Activated CD4-positive, alpha-beta T cell treated with anti-CD3 and anti-CD28 coated beads for 36 hours (primary cell): ENCODE measurements at regions of chr2 and their contacts with region 1.

Region 1: GRCh38 chr2:178414266-178415247 is 36.4 kb downstream of the PRKRA start:
- DNase-seq: peak; percentile 90
- ATAC-seq: peak; percentile 83
- H3K4me3 Mint-ChIP-seq: peak overlapping the region; percentile 67
- H3K27ac Mint-ChIP-seq: peak overlapping the region; percentile 71
- H3K4me1 Mint-ChIP-seq: peaks cover 11% of the 10 kb centered on the region
- H3K27me3 Mint-ChIP-seq: no peaks in the 10 kb centered on the region

Region 2: GRCh38 chr2:177906041-177906718 is 508.4 kb before region 1 on chr2:
- CTCF ChIA-PET with region 1: no interaction called
- POLR2A ChIA-PET with region 1: no interaction called
- intact Hi-C with region 1: loop called in 1 of 2 experiments (anchors 5 kb)
- DNase-seq: peak; percentile 87
- ATAC-seq: peak; percentile 95
- H3K4me3 Mint-ChIP-seq: no peak overlapping the region
- H3K27ac Mint-ChIP-seq: no peak overlapping the region
- H3K4me1 Mint-ChIP-seq: peaks cover 3% of the 10 kb centered on the region
- H3K27me3 Mint-ChIP-seq: peaks cover 2% of the 10 kb centered on the region

Region 3: GRCh38 chr2:178112202-178113152 is 302.1 kb before region 1 on chr2 and contains the start of gene RBM45:
- CTCF ChIA-PET with region 1: interaction called, 44 read pairs
- POLR2A ChIA-PET with region 1: no interaction called
- intact Hi-C with region 1: loop called (anchors 1 kb)
- DNase-seq: peak; percentile 93
- ATAC-seq: peak; percentile 93
- H3K4me3 Mint-ChIP-seq: peak within 1 kb of the TSS; percentile 92
- H3K27ac Mint-ChIP-seq: peak within 1 kb of the TSS; percentile 87
- H3K4me1 Mint-ChIP-seq: peaks cover 33% of the 10 kb centered on the region
- H3K27me3 Mint-ChIP-seq: no peaks in the 10 kb centered on the region
- total RNA-seq, gene RBM45: 10.0 to 12.9 TPM

Region 4: DNA sequence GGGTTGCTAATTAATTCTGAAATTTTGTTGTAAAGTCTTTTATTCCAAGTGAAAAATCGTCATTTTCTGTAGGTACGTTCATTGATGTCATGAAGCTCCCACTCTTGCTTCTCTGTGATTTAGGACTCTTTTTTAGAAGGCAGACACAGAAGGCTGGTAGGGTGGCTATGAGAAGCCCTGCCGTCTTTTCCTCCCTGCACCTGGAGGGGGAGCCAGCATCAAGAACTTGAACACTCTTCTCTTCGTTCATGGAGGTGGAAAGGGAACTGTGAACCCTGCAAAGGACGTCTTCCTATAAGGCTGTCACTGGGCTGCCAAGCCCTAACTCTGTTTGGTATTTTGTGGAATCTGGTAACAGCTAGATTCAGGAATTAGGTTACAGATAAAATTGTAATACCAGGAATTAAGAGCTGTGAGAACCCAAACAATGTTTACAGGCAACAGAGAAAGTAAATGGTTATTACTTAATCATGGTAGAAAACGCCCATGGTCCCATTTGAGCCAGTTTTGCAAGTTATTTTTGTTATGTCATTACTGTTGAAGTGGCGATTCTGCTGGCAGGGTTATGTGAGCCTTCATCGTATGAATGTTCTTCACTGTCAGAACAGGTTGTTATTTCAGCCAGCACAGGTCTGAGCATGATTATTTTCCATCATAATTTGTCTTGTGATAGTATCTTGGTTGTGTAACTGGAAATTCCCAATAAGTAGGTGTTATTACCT is 108.0 kb before region 1 on chr2:
- CTCF ChIA-PET with region 1: interaction called, 10 read pairs
- POLR2A ChIA-PET with region 1: no interaction called
- intact Hi-C with region 1: loop called (anchors 1 to 2 kb)
- DNase-seq: peak; percentile 59
- ATAC-seq: peak; percentile 77
- H3K4me3 Mint-ChIP-seq: no peak overlapping the region
- H3K27ac Mint-ChIP-seq: no peak overlapping the region
- H3K4me1 Mint-ChIP-seq: no peaks in the 10 kb centered on the region
- H3K27me3 Mint-ChIP-seq: peaks cover 12% of the 10 kb centered on the region

Region 5: GRCh38 chr2:178404368-178404767 is 10.2 kb before region 1 on chr2:
- CTCF ChIA-PET with region 1: interaction called, 91 read pairs
- POLR2A ChIA-PET with region 1: no interaction called
- intact Hi-C with region 1: no loop called
- DNase-seq: peak; percentile 37
- ATAC-seq: peak; percentile 78
- H3K4me3 Mint-ChIP-seq: no peak overlapping the region
- H3K27ac Mint-ChIP-seq: no peak overlapping the region
- H3K4me1 Mint-ChIP-seq: peaks cover 10% of the 10 kb centered on the region
- H3K27me3 Mint-ChIP-seq: peaks cover 2% of the 10 kb centered on the region

Region 6: DNA sequence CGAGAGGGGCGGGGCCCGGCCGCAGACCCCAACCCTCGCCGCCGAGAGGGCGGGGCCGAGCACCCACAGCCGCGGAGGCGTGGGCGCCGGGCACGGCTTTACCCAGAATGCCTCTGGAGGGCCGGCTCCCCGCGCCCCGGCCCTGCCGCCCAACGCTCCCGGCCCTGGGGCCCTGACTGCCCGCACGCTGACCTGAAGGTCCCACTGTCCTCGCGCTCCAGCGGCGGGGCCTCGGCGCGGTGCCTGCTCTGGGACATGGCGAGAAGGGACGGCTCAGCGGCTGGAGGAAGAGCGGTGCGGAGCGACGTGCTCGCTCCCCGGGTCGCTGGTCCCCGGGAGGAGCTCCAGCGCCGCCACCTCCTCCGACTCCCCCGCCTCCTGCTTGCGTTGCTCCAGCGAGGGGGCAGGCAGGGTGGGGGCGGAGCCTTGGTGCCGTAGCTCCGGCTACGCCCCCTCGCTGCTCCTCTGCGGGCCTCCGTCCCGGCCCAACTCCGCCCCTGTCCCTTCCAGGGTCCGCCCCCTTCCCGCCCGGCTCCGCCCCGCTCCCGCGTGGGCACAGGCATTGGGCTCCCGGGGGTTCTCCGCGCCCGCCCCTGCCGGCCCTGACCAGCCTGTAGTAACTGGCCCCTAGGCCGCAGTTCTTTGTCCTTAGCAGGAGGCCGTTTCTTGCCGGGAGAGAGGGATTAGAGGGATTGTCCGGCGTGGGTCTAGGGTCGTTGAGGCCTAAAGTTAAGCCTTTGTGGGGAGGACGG is 36.4 kb after region 1 on chr2 and contains the starts of genes PJVK and PRKRA:
- CTCF ChIA-PET with region 1: interaction called, 7 read pairs
- POLR2A ChIA-PET with region 1: interaction called, 4 read pairs
- intact Hi-C with region 1: loop called (anchors 1 kb)
- DNase-seq: peak; percentile 98
- ATAC-seq: peak; percentile 90
- H3K4me3 Mint-ChIP-seq: peak within 1 kb of the TSS; percentile 88
- H3K27ac Mint-ChIP-seq: peak within 1 kb of the TSS; percentile 96
- H3K4me1 Mint-ChIP-seq: peaks cover 27% of the 10 kb centered on the region
- H3K27me3 Mint-ChIP-seq: no peaks in the 10 kb centered on the region
- total RNA-seq, gene PJVK: 1.9 to 2.4 TPM
- total RNA-seq, gene PRKRA: 63.5 to 65.1 TPM

Region 7: GRCh38 chr2:178491612-178492011 is 77.1 kb after region 1 on chr2:
- CTCF ChIA-PET with region 1: no interaction called
- POLR2A ChIA-PET with region 1: no interaction called
- intact Hi-C with region 1: no loop called
- DNase-seq: no peak
- ATAC-seq: no peak
- H3K4me3 Mint-ChIP-seq: no peak overlapping the region
- H3K27ac Mint-ChIP-seq: no peak overlapping the region
- H3K4me1 Mint-ChIP-seq: peaks cover 13% of the 10 kb centered on the region
- H3K27me3 Mint-ChIP-seq: no peaks in the 10 kb centered on the region

Region 8: GRCh38 chr2:178522950-178523595 is 108.5 kb after region 1 on chr2:
- CTCF ChIA-PET with region 1: interaction called, 4 read pairs
- POLR2A ChIA-PET with region 1: no interaction called
- intact Hi-C with region 1: loop called in 1 of 2 experiments (anchors 5 kb)
- DNase-seq: peak; percentile 90
- ATAC-seq: peak; percentile 80
- H3K4me3 Mint-ChIP-seq: peak overlapping the region; percentile 85
- H3K27ac Mint-ChIP-seq: peak overlapping the region; percentile 92
- H3K4me1 Mint-ChIP-seq: peaks cover 55% of the 10 kb centered on the region
- H3K27me3 Mint-ChIP-seq: no peaks in the 10 kb centered on the region

Region 9: GRCh38 chr2:178700922-178701342 is 286.4 kb after region 1 on chr2:
- CTCF ChIA-PET with region 1: no interaction called
- POLR2A ChIA-PET with region 1: no interaction called
- intact Hi-C with region 1: no loop called
- DNase-seq: peak; percentile 4
- ATAC-seq: no peak
- H3K4me3 Mint-ChIP-seq: no peak overlapping the region
- H3K27ac Mint-ChIP-seq: no peak overlapping the region
- H3K4me1 Mint-ChIP-seq: no peaks in the 10 kb centered on the region
- H3K27me3 Mint-ChIP-seq: no peaks in the 10 kb centered on the region